Endothelial cell of umbilical vein (primary cell): ENCODE measurements at regions of chr13 and their contacts with region 1.

Region 1: DNA sequence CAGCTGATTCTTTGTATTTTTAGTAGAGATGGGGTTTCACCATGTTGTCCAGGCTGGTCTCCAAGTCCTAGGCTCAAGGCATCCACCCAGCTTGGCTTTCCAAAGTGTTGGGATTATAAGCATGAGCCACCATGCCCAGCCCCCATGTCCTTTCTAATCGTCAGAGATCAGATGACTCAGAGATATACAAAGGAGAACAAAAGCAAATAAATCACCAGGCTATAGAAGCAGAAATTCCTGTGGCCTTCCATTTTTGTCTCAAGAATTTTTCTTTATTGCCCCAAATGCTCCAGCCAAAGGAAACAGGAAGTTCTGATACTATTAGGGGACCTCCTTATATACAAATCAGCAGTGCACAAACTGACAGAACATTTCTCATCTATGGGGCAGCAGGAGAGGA is 207.8 kb downstream of the RFC3 start:
- DNase-seq: peak; percentile 57
- H3K4me3 ChIP-seq: no peak overlapping the region
- H3K27ac ChIP-seq: peak overlapping the region; percentile 71
- H3K4me1 ChIP-seq: peaks cover 13% of the 10 kb centered on the region
- H3K27me3 ChIP-seq: no peaks in the 10 kb centered on the region
- CTCF ChIP-seq: no peak
- POLR2A ChIP-seq: no peak

Region 2: GRCh38 chr13:34044660-34045080 is 18.9 kb after region 1 on chr13:
- CTCF ChIA-PET with region 1: interaction called, 4 read pairs
- POLR2A ChIA-PET with region 1: no interaction called
- dilution Hi-C with region 1: no loop called
- intact Hi-C with region 1: loop called (anchors 2 kb)
- DNase-seq: peak; percentile 64
- H3K4me3 ChIP-seq: no peak overlapping the region
- H3K27ac ChIP-seq: peak overlapping the region; percentile 41
- H3K4me1 ChIP-seq: peaks cover 12% of the 10 kb centered on the region
- H3K27me3 ChIP-seq: no peaks in the 10 kb centered on the region
- CTCF ChIP-seq: no peak
- POLR2A ChIP-seq: no peak

Region 3: GRCh38 chr13:34064456-34065205 is 38.9 kb after region 1 on chr13:
- CTCF ChIA-PET with region 1: no interaction called
- POLR2A ChIA-PET with region 1: no interaction called
- dilution Hi-C with region 1: no loop called
- intact Hi-C with region 1: loop called (anchors 1 kb)
- DNase-seq: peak; percentile 81
- H3K4me3 ChIP-seq: no peak overlapping the region
- H3K27ac ChIP-seq: no peak overlapping the region
- H3K4me1 ChIP-seq: peaks cover 4% of the 10 kb centered on the region
- H3K27me3 ChIP-seq: no peaks in the 10 kb centered on the region
- CTCF ChIP-seq: no peak
- POLR2A ChIP-seq: no peak

Region 4: DNA sequence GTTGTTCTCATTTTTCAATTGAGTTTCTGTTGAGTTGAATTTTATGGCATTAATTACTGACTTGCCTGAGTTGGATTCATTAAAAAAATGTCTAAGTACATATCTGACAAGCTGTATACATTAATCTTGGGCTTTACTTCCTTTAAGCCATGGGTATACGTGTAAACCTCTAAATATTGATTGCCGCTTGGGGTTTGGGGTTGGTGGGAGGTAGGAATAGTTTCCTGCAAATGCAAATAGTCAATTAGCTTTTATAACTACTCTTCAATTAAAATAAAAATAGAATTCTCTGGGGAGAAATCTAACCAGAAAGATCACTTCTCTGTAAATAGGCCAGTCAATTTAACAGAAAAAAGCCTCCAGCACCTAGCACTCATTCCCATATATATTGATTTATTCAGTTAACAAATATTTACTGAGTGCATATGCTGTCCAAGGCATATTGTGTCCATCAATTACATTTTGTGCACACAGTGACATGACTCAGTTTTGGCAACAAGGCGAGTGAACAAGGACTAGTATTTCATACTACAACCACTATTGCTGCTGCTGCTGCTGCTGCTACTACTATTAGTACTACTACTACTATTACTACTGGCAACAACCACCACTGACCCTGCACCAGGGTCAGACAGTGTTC is 99.0 kb after region 1 on chr13:
- CTCF ChIA-PET with region 1: no interaction called
- POLR2A ChIA-PET with region 1: no interaction called
- dilution Hi-C with region 1: no loop called
- intact Hi-C with region 1: no loop called
- DNase-seq: no peak
- H3K4me3 ChIP-seq: no peak overlapping the region
- H3K27ac ChIP-seq: no peak overlapping the region
- H3K4me1 ChIP-seq: no peaks in the 10 kb centered on the region
- H3K27me3 ChIP-seq: no peaks in the 10 kb centered on the region
- CTCF ChIP-seq: no peak
- POLR2A ChIP-seq: no peak